ENCODE measurements at regions of chr1 and their contacts with region 1.

Region 1: DNA sequence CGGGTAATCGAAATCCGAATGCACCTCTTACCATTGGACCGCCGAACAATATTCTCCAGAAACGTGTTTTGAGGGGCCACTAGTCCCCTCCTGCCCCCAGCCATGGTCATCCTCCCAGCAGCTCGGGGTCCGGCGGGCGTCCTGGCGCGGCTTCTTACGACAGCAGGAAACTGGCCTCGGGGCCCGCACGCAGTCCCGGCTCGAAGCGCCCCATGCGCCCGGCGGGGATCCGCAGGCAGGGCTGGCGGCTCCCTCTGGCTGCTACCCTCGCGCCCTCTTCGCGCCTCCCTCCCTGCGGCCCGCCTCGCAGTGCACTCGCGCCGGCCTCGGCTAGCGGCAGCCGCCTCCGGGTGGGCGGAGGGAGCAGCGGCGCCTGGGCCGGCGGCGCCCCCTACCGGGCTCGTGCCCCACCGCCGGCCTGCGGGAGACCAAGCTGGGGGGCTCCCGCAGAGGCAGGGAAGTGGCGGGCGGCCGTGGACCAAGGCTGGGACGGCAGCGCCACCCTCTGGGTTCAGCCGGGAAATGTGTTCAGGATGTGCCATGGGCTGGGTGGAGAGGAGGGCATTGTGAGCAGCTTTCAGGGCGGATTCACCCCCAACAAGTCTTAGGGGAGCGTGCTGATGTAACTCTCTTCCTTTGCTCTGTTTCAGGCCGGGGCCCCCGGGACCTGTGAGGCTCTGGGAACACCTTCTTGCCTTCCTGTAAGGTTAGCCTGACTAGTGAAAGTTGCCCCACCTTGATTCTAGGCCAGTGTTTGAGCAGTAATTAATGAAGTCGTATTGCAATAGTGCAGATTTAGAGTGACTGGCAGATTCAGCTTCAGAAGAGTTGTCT is at the start of gene KCNH1:
- DNase-seq: peak; percentile 7
- ATAC-seq: peak; percentile 97
- H3K4me3 ChIP-seq: no peak within 1 kb of the TSS
- H3K27ac ChIP-seq: no peak within 1 kb of the TSS
- H3K4me1 ChIP-seq: no peaks in the 10 kb centered on the region
- H3K27me3 ChIP-seq: peaks cover 0 to 4% of the 10 kb centered on the region in 2 experiments; a peak in 2 of 4 replicates
- CTCF ChIP-seq: peak; percentile 69 to 83 (median 81)
- EP300 ChIP-seq: no peak
- POLR2A ChIP-seq: no peak
- RAD21 ChIP-seq: peak; percentile 63
- polyA plus RNA-seq, gene KCNH1: 0.02 TPM in 1 of 2 experiments, not detected in the other

Region 2: GRCh38 chr1:211169353-211169752 is 35.3 kb after region 1 on chr1:
- CTCF ChIA-PET with region 1: no interaction called
- POLR2A ChIA-PET with region 1: no interaction called
- RAD21 ChIA-PET with region 1: no interaction called
- SMC1A ChIA-PET with region 1: no interaction called
- in situ Hi-C with region 1: no loop called
- intact Hi-C with region 1: no loop called
- DNase-seq: no peak
- ATAC-seq: no peak
- H3K4me3 ChIP-seq: no peak overlapping the region
- H3K27ac ChIP-seq: no peak overlapping the region
- H3K4me1 ChIP-seq: no peaks in the 10 kb centered on the region
- H3K27me3 ChIP-seq: no peaks in the 10 kb centered on the region
- CTCF ChIP-seq: no peak
- EP300 ChIP-seq: no peak
- POLR2A ChIP-seq: no peak
- RAD21 ChIP-seq: no peak

Region 3: DNA sequence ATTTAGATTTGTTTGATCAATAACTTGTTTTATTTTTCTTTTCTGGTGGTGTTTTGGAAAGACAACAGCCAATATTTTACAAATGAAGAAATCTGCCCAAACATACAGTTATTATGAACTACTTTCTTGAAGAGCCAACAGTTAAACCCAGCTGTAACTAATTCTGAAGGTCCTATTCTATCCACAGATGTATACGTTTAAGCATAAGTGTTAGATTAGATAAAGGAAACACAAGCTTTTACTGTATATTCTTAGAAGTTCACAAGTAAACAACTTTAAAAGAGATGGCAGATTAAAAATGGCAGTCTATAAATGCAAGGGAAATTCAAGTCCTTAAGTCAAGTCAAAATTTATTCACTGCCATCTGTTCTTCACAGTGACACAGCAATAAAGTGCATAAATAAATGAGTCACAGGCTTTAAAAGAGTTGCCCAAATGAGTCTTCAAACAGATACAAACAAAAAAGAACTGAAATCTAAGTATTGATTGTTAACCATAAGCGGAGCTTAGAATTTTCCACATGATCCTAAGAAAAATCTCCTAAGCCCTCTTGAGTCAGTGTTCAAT is 49.8 kb after region 1 on chr1:
- CTCF ChIA-PET with region 1: no interaction called
- POLR2A ChIA-PET with region 1: no interaction called
- RAD21 ChIA-PET with region 1: no interaction called
- SMC1A ChIA-PET with region 1: no interaction called
- in situ Hi-C with region 1: no loop called
- intact Hi-C with region 1: no loop called
- DNase-seq: no peak
- ATAC-seq: no peak
- H3K4me3 ChIP-seq: no peak overlapping the region
- H3K27ac ChIP-seq: no peak overlapping the region
- H3K4me1 ChIP-seq: no peaks in the 10 kb centered on the region
- H3K27me3 ChIP-seq: no peaks in the 10 kb centered on the region
- CTCF ChIP-seq: no peak
- EP300 ChIP-seq: no peak
- POLR2A ChIP-seq: no peak
- RAD21 ChIP-seq: no peak

Region 4: DNA sequence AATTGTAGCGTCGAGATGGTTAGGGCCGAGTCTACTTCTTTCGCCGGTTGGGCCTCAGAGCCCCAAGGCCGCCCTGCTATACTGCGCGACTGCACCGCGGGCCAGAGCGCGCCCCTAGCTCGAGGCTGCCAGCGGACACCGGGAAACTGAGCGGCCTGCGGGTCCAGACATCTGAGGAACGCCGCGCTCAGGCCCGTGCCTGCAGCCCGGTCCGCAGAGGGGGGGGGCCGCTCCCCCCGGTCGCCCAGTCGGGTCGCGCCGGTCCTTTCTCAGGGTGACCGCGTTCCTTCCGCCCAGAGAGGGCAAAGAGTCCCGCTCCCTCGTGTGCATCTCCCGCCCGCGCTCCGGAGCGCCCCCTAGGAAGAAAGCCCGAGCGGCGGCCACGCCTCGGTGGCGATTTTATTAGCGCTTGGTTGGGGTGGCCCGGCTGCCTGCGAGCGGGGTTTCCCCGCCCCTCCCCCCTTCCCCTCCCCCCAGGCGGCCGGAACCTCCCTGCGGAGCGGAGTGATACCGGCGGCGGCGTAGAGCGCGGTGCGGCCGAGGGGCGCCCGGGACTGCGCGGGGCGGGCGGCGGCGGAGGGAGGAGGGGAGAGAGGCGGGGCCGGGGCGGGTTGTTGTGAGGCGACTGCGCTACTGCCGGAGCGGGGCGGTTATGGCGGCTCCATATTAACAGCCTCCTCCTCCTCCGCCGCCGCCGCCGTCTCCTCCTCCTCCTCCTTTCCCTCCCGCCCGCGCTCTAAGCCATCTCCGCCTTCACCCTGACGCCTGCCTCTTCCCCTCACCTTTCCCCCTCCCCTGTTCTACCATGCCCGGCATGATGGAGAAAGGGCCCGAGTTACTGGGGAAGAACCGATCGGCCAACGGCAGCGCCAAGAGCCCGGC is 124.9 kb after region 1 on chr1 and contains the start of gene RCOR3:
- CTCF ChIA-PET with region 1: interaction called, 4 read pairs
- POLR2A ChIA-PET with region 1: no interaction called
- RAD21 ChIA-PET with region 1: no interaction called
- SMC1A ChIA-PET with region 1: interaction called, 4 read pairs
- in situ Hi-C with region 1: no loop called
- intact Hi-C with region 1: loop called (anchors 5 kb)
- DNase-seq: peak; percentile 51
- ATAC-seq: peak; percentile 83
- H3K4me3 ChIP-seq: peak within 1 kb of the TSS; percentile 96
- H3K27ac ChIP-seq: peak within 1 kb of the TSS; percentile 96
- H3K4me1 ChIP-seq: no peaks in the 10 kb centered on the region
- H3K27me3 ChIP-seq: no peaks in the 10 kb centered on the region
- CTCF ChIP-seq: peak; percentile 51 to 83 (median 70)
- EP300 ChIP-seq: peak; percentile 37 to 38; a peak in 1 of 4 replicates
- POLR2A ChIP-seq: peak; percentile 78
- RAD21 ChIP-seq: peak; percentile 31
- polyA plus RNA-seq, gene RCOR3: 8.0 to 8.2 TPM

Region 5: DNA sequence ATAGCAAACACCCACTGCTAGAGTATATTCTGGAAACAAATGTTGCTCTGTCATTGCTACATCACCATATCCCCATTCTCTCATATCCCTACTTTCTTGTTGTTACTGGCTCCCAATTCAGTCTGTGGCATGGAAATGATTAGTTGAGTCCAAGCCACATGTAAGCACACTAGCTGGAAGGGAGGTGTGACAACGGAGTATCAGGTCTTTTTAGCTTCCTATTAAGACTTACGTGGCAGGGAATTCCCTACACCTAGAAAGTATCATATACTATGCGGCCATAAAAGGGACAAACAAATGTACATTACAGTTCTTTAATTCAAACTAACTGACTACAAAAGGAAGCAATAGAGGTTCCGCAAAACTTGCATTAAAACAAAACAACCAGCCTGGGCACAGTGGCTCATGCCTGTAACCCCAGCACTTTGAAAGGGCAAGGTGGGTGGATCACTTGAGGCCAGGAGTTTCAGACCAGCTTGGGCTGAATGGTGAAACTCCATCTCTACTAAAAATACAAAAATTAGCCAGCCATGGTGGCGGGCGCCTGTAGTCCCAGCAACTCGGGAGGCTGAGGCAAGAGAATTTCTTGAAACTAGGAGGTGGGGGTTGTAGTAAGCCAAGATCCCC is 852.7 kb after region 1 on chr1:
- CTCF ChIA-PET with region 1: no interaction called
- POLR2A ChIA-PET with region 1: no interaction called
- RAD21 ChIA-PET with region 1: no interaction called
- SMC1A ChIA-PET with region 1: no interaction called
- in situ Hi-C with region 1: no loop called
- intact Hi-C with region 1: no loop called
- DNase-seq: peak; percentile 27
- ATAC-seq: no peak
- H3K4me3 ChIP-seq: no peak overlapping the region
- H3K27ac ChIP-seq: peak overlapping the region; percentile 88
- H3K4me1 ChIP-seq: peaks cover 16% of the 10 kb centered on the region
- H3K27me3 ChIP-seq: no peaks in the 10 kb centered on the region
- CTCF ChIP-seq: no peak
- EP300 ChIP-seq: no peak
- POLR2A ChIP-seq: no peak
- RAD21 ChIP-seq: no peak

Measured in GM12878 (cell line).